ENCODE measurements at regions of chr1 and their contacts with region 1.

Region 1: DNA sequence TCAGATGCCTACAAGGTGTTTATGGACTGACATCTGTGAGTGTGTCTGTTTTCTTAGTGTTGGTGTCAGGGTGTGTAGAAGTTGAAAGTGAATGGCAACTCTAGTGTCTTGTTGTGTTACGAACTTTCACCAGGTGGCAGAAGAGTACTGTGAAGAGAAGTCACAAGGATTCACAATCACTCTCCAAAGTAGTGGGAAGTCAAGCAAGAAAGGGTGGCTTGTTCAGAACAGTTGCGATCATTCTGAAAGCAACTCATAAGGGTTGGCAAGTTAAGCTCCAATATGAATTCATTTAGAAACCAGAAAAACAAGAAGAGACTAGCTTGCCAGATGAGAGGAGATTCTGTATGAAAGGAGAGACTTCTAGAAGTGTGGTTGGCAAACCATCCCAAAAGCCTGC is 86.1 kb downstream of the FASLG start:
- DNase-seq: peak; percentile 82
- ATAC-seq: peak; percentile 68
- H3K4me3 ChIP-seq: no peak overlapping the region
- H3K4me3 Mint-ChIP-seq: peak overlapping the region; percentile 61
- H3K27ac ChIP-seq: no peak overlapping the region
- H3K27ac Mint-ChIP-seq: peak overlapping the region; percentile 13
- H3K4me1 ChIP-seq: peaks cover 26 to 27% of the 10 kb centered on the region in 2 donors
- H3K4me1 Mint-ChIP-seq: peaks cover 32% of the 10 kb centered on the region
- H3K27me3 ChIP-seq: peaks cover 0 to 8% (median 0%) of the 10 kb centered on the region in 4 experiments
- H3K27me3 Mint-ChIP-seq: peaks cover 5% of the 10 kb centered on the region
- CTCF ChIP-seq: peak; percentile 83

Region 2: DNA sequence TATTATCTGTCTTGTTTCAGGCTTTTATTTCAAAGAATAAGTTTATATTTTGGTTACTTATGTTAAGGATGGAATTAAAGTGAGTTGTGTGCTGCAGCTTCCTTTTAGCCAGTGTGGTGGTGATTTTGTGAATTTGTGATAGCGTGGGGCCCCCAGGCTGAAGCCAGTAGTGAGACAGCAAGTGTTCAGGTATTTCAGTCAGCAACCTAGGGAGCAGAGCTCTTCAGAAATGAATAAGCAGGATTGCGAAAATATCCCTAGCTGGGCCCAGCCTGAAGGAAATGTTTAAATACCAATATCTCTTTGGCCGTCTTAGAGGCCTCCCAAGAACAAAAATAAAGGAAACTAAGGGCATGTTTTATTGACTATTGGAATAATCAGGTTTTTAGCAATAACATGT is 475.4 kb before region 1 on chr1:
- CTCF ChIA-PET with region 1: no interaction called
- POLR2A ChIA-PET with region 1: no interaction called
- intact Hi-C with region 1: no loop called
- DNase-seq: no peak
- ATAC-seq: no peak
- H3K4me3 ChIP-seq: no peak overlapping the region
- H3K4me3 Mint-ChIP-seq: no peak overlapping the region
- H3K27ac ChIP-seq: no peak overlapping the region
- H3K27ac Mint-ChIP-seq: no peak overlapping the region
- H3K4me1 ChIP-seq: no peaks in the 10 kb centered on the region
- H3K4me1 Mint-ChIP-seq: peaks cover 12% of the 10 kb centered on the region
- H3K27me3 ChIP-seq: no peaks in the 10 kb centered on the region
- H3K27me3 Mint-ChIP-seq: no peaks in the 10 kb centered on the region
- CTCF ChIP-seq: no peak

Region 3: DNA sequence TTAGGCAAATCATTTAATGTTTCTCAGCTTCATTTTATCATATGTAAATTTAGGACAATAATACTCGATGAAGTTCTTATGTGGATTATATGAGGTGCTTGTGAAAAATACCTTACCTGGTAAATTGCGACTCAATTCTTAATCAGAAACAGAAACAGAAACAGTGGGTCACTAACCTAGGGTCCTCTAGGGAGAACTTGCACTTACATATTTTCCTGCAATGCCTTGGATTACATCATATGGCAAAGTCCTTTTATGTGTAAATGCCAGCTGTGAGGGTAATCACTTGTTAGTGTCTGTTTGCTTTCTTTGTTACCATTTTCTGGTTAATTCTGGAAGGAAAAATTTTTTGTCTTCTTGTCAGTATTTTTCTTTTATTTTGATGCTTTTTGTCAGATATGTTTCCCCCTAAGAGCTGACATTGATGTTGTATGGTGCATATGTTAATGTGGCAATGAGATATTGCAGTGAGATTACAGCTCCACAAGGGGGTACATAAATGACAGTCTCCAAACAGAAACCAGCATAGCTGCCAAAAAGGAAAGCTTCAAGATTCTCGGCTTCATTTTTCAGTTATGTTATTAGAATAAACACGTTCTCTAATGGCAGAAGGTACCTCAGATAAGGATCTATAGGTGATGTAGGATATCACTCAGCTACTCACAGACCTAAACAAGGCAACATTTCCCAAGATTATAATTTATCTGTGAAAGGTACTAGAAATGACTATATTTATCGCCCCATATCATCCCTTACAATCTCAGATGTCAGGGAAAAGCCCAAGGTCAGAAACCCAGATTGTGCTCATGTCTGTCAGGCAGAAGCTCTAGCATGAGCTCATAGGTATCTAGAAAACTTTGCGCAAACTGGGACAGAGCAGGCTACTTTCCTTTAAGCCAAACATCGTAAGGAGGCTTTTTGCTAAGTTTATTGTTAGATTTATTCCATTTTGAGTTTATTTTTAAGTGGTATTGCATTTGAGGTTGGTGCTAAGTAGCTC is 33.7 kb after region 1 on chr1:
- CTCF ChIA-PET with region 1: interaction called, 20 read pairs
- POLR2A ChIA-PET with region 1: interaction called, 10 read pairs
- intact Hi-C with region 1: no loop called
- DNase-seq: peak; percentile 33
- ATAC-seq: peak; percentile 73
- H3K4me3 ChIP-seq: no peak overlapping the region
- H3K4me3 Mint-ChIP-seq: peak overlapping the region; percentile 28
- H3K27ac ChIP-seq: no peak overlapping the region
- H3K27ac Mint-ChIP-seq: no peak overlapping the region
- H3K4me1 ChIP-seq: peaks cover 13 to 14% of the 10 kb centered on the region in 2 donors
- H3K4me1 Mint-ChIP-seq: peaks cover 26% of the 10 kb centered on the region
- H3K27me3 ChIP-seq: no peaks in the 10 kb centered on the region
- H3K27me3 Mint-ChIP-seq: no peaks in the 10 kb centered on the region
- CTCF ChIP-seq: peak; percentile 39

Region 4: DNA sequence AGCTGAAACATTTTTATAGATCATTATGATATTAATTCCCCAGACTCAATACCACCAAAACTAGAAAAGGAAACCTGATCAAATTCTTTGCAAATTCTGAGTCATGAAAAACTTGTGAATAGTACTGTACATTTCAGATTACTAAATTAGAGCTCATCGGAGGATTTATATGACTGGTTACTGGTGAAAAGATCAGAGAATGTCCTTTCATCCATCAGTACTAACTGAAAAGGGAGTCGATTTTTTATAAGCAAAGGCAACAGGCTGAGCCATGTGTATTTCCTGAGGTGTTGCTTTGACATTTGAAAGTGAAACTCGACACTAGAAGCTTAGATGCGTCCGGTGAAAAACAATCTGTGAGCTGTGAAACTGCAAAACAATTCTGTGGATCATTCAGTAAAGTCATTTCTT is 150.0 kb after region 1 on chr1:
- CTCF ChIA-PET with region 1: interaction called, 3 read pairs
- POLR2A ChIA-PET with region 1: no interaction called
- intact Hi-C with region 1: loop called (anchors 10 kb)
- DNase-seq: peak; percentile 53
- ATAC-seq: peak; percentile 82
- H3K4me3 ChIP-seq: peak overlapping the region in 3 of 5 experiments; percentile 27 to 50 (median 29)
- H3K4me3 Mint-ChIP-seq: peak overlapping the region; percentile 63
- H3K27ac ChIP-seq: peak overlapping the region; percentile 25 to 70
- H3K27ac Mint-ChIP-seq: peak overlapping the region; percentile 76
- H3K4me1 ChIP-seq: peaks cover 20% of the 10 kb centered on the region in 2 donors
- H3K4me1 Mint-ChIP-seq: peaks cover 40% of the 10 kb centered on the region
- H3K27me3 ChIP-seq: no peaks in the 10 kb centered on the region
- H3K27me3 Mint-ChIP-seq: no peaks in the 10 kb centered on the region
- CTCF ChIP-seq: no peak

Region 5: GRCh38 chr1:173202430-173203145 is 457.6 kb after region 1 on chr1:
- CTCF ChIA-PET with region 1: interaction called, 472 read pairs
- POLR2A ChIA-PET with region 1: interaction called, 13 read pairs
- intact Hi-C with region 1: loop called (anchors 1 kb)
- DNase-seq: peak; percentile 60
- ATAC-seq: no peak
- H3K4me3 ChIP-seq: no peak overlapping the region
- H3K4me3 Mint-ChIP-seq: no peak overlapping the region
- H3K27ac ChIP-seq: no peak overlapping the region
- H3K27ac Mint-ChIP-seq: no peak overlapping the region
- H3K4me1 ChIP-seq: peaks cover 41 to 63% of the 10 kb centered on the region in 2 donors
- H3K4me1 Mint-ChIP-seq: peaks cover 40% of the 10 kb centered on the region
- H3K27me3 ChIP-seq: no peaks in the 10 kb centered on the region
- H3K27me3 Mint-ChIP-seq: no peaks in the 10 kb centered on the region
- CTCF ChIP-seq: peak; percentile 62

Region 6: GRCh38 chr1:173429471-173430402 is 684.7 kb after region 1 on chr1:
- CTCF ChIA-PET with region 1: interaction called, 73 read pairs
- POLR2A ChIA-PET with region 1: no interaction called
- intact Hi-C with region 1: no loop called
- DNase-seq: peak; percentile 82
- ATAC-seq: peak; percentile 89
- H3K4me3 ChIP-seq: peak overlapping the region; percentile 20 to 50 (median 31)
- H3K4me3 Mint-ChIP-seq: peak overlapping the region; percentile 74
- H3K27ac ChIP-seq: peak overlapping the region; percentile 43 to 63
- H3K27ac Mint-ChIP-seq: peak overlapping the region; percentile 84
- H3K4me1 ChIP-seq: peaks cover 20 to 23% of the 10 kb centered on the region in 2 donors
- H3K4me1 Mint-ChIP-seq: peaks cover 24% of the 10 kb centered on the region
- H3K27me3 ChIP-seq: no peaks in the 10 kb centered on the region
- H3K27me3 Mint-ChIP-seq: no peaks in the 10 kb centered on the region
- CTCF ChIP-seq: peak; percentile 78

Region 7: GRCh38 chr1:173937062-173937461 is 1192.0 kb after region 1 on chr1:
- CTCF ChIA-PET with region 1: no interaction called
- POLR2A ChIA-PET with region 1: no interaction called
- intact Hi-C with region 1: loop called (anchors 10 kb)
- DNase-seq: no peak
- ATAC-seq: no peak
- H3K4me3 ChIP-seq: no peak overlapping the region
- H3K4me3 Mint-ChIP-seq: no peak overlapping the region
- H3K27ac ChIP-seq: no peak overlapping the region
- H3K27ac Mint-ChIP-seq: no peak overlapping the region
- H3K4me1 ChIP-seq: no peaks in the 10 kb centered on the region
- H3K4me1 Mint-ChIP-seq: no peaks in the 10 kb centered on the region
- H3K27me3 ChIP-seq: no peaks in the 10 kb centered on the region
- H3K27me3 Mint-ChIP-seq: no peaks in the 10 kb centered on the region
- CTCF ChIP-seq: no peak